Naive thymus-derived CD4-positive, alpha-beta T cell (primary cell): ENCODE measurements at regions of chr6 and their contacts with region 1.

Region 1: GRCh38 chr6:13795041-13795750 is 19.2 kb downstream of the MCUR1 start:
- DNase-seq: peak; percentile 54 to 80 (median 77)
- ATAC-seq: peak; percentile 98
- H3K4me3 ChIP-seq: no peak overlapping the region
- H3K4me3 Mint-ChIP-seq: no peak overlapping the region
- H3K27ac ChIP-seq: no peak overlapping the region
- H3K27ac Mint-ChIP-seq: peak overlapping the region in 5 of 9 donors; percentile 7 to 50 (median 27)
- H3K4me1 ChIP-seq: no peaks in the 10 kb centered on the region
- H3K4me1 Mint-ChIP-seq: peaks cover 5 to 16% (median 6%) of the 10 kb centered on the region in 7 donors
- H3K27me3 ChIP-seq: no peaks in the 10 kb centered on the region
- H3K27me3 Mint-ChIP-seq: no peaks in the 10 kb centered on the region

Region 2: GRCh38 chr6:13767121-13767808 is 27.9 kb before region 1 on chr6:
- CTCF ChIA-PET with region 1: no interaction called
- POLR2A ChIA-PET with region 1: no interaction called
- intact Hi-C with region 1: loop called in 1 of 2 experiments (anchors 2 kb)
- DNase-seq: peak in 8 of 9 donors; percentile 12 to 48 (median 30)
- ATAC-seq: peak; percentile 66
- H3K4me3 ChIP-seq: peak overlapping the region; percentile 51
- H3K4me3 Mint-ChIP-seq: peak overlapping the region; percentile 53 to 86 (median 76)
- H3K27ac ChIP-seq: no peak overlapping the region
- H3K27ac Mint-ChIP-seq: peak overlapping the region in 7 of 9 donors; percentile 6 to 92 (median 59)
- H3K4me1 ChIP-seq: peaks cover 8 to 13% of the 10 kb centered on the region in 2 donors
- H3K4me1 Mint-ChIP-seq: peaks cover 10 to 49% (median 30%) of the 10 kb centered on the region in 7 donors
- H3K27me3 ChIP-seq: no peaks in the 10 kb centered on the region
- H3K27me3 Mint-ChIP-seq: peaks cover 0 to 6% (median 0%) of the 10 kb centered on the region in 5 donors

Region 3: GRCh38 chr6:13859871-13860555 is 64.8 kb after region 1 on chr6:
- CTCF ChIA-PET with region 1: no interaction called
- POLR2A ChIA-PET with region 1: no interaction called
- intact Hi-C with region 1: no loop called
- DNase-seq: no peak
- ATAC-seq: no peak
- H3K4me3 ChIP-seq: no peak overlapping the region
- H3K4me3 Mint-ChIP-seq: peak overlapping the region in 9 of 10 donors; percentile 27 to 59 (median 46)
- H3K27ac ChIP-seq: no peak overlapping the region
- H3K27ac Mint-ChIP-seq: no peak overlapping the region
- H3K4me1 ChIP-seq: no peaks in the 10 kb centered on the region
- H3K4me1 Mint-ChIP-seq: peaks cover 0 to 6% (median 0%) of the 10 kb centered on the region in 7 donors
- H3K27me3 ChIP-seq: peaks cover 3 to 4% of the 10 kb centered on the region in 2 donors
- H3K27me3 Mint-ChIP-seq: peaks cover 45 to 54% (median 48%) of the 10 kb centered on the region in 5 donors

Region 4: GRCh38 chr6:13873285-13874190 is 78.3 kb after region 1 on chr6:
- CTCF ChIA-PET with region 1: interaction called, 3 read pairs
- POLR2A ChIA-PET with region 1: no interaction called
- intact Hi-C with region 1: loop called (anchors 1 to 2 kb)
- DNase-seq: peak; percentile 41 to 75 (median 66)
- ATAC-seq: peak; percentile 88
- H3K4me3 ChIP-seq: peak overlapping the region; percentile 59
- H3K4me3 Mint-ChIP-seq: peak overlapping the region; percentile 76 to 92 (median 85)
- H3K27ac ChIP-seq: peak overlapping the region; percentile 2
- H3K27ac Mint-ChIP-seq: peak overlapping the region in 5 of 9 donors; percentile 3 to 60 (median 38)
- H3K4me1 ChIP-seq: peaks cover 0 to 4% of the 10 kb centered on the region in 2 donors
- H3K4me1 Mint-ChIP-seq: peaks cover 9 to 20% (median 17%) of the 10 kb centered on the region in 7 donors
- H3K27me3 ChIP-seq: no peaks in the 10 kb centered on the region
- H3K27me3 Mint-ChIP-seq: peaks cover 2 to 14% (median 7%) of the 10 kb centered on the region in 5 donors

Region 5: GRCh38 chr6:13903364-13903763 is 108.2 kb after region 1 on chr6:
- CTCF ChIA-PET with region 1: no interaction called
- POLR2A ChIA-PET with region 1: no interaction called
- intact Hi-C with region 1: no loop called
- DNase-seq: no peak
- ATAC-seq: no peak
- H3K4me3 ChIP-seq: no peak overlapping the region
- H3K4me3 Mint-ChIP-seq: no peak overlapping the region
- H3K27ac ChIP-seq: no peak overlapping the region
- H3K27ac Mint-ChIP-seq: no peak overlapping the region
- H3K4me1 ChIP-seq: no peaks in the 10 kb centered on the region
- H3K4me1 Mint-ChIP-seq: no peaks in the 10 kb centered on the region
- H3K27me3 ChIP-seq: no peaks in the 10 kb centered on the region
- H3K27me3 Mint-ChIP-seq: peaks cover 38 to 49% (median 44%) of the 10 kb centered on the region in 5 donors

Region 6: GRCh38 chr6:14046476-14047068 is 251.4 kb after region 1 on chr6:
- CTCF ChIA-PET with region 1: interaction called, 4 read pairs
- POLR2A ChIA-PET with region 1: no interaction called
- intact Hi-C with region 1: loop called (anchors 1 kb)
- DNase-seq: peak in 6 of 9 donors; percentile 26 to 47 (median 38)
- ATAC-seq: peak; percentile 80
- H3K4me3 ChIP-seq: no peak overlapping the region
- H3K4me3 Mint-ChIP-seq: no peak overlapping the region
- H3K27ac ChIP-seq: no peak overlapping the region
- H3K27ac Mint-ChIP-seq: peak overlapping the region in 1 of 9 donors; percentile 5
- H3K4me1 ChIP-seq: no peaks in the 10 kb centered on the region
- H3K4me1 Mint-ChIP-seq: peaks cover 0 to 4% (median 0%) of the 10 kb centered on the region in 7 donors
- H3K27me3 ChIP-seq: no peaks in the 10 kb centered on the region
- H3K27me3 Mint-ChIP-seq: peaks cover 12 to 48% (median 32%) of the 10 kb centered on the region in 5 donors

Region 7: GRCh38 chr6:15621203-15622044 is 1826.2 kb after region 1 on chr6:
- CTCF ChIA-PET with region 1: no interaction called
- POLR2A ChIA-PET with region 1: no interaction called
- intact Hi-C with region 1: loop called in 1 of 2 experiments (anchors 2 kb)
- DNase-seq: peak in 1 of 9 donors; percentile 34
- ATAC-seq: peak; percentile 86
- H3K4me3 ChIP-seq: no peak overlapping the region
- H3K4me3 Mint-ChIP-seq: peak overlapping the region in 1 of 10 donors; percentile 5
- H3K27ac ChIP-seq: no peak overlapping the region
- H3K27ac Mint-ChIP-seq: peak overlapping the region in 2 of 9 donors; percentile 3 to 52
- H3K4me1 ChIP-seq: no peaks in the 10 kb centered on the region
- H3K4me1 Mint-ChIP-seq: peaks cover 19 to 55% (median 42%) of the 10 kb centered on the region in 7 donors
- H3K27me3 ChIP-seq: no peaks in the 10 kb centered on the region
- H3K27me3 Mint-ChIP-seq: no peaks in the 10 kb centered on the region